GM13976 (cell line): ENCODE measurements at regions of chr3 and their contacts with region 1.

Region 1: DNA sequence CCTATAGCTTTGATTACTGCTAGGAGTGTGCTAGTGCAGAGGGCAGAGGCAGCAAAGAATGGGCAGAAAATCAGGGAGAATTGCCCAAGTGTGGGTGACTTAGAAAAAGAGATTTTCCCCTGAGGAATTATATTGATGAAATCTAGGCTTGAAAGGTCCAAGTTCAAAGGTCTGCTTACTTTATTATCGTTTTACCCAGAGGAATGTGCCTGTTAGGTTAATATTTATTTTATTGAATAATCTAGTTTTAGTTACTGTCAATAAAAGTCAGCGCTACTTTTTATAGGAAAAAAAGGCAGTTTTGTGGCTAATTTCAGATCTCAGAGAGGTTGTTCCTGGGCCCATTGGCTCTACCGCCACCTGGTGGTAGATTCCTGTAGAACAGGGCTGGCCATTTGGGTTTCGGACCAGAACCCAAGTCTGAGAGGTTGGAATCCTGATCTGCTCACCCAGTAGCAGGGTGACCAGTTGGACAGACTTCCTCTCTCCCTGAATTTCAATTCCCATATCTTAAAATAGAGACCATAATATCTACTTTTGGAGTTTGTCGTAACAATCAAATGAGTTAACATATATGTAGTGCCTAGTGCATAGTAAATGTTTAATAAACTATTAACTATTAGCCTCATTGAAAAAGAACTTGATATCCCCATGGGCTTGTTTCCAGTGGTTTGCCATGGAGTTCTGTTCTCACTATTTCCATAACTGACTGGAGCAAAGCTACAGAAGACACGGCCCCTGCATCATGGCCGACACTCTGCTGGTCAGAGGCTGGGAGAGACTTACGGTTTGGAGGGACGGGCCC is 62.7 kb upstream of the ZNF148 start:
- DNase-seq: peak; percentile 52
- CTCF ChIP-seq: peak; percentile 91

Region 2: DNA sequence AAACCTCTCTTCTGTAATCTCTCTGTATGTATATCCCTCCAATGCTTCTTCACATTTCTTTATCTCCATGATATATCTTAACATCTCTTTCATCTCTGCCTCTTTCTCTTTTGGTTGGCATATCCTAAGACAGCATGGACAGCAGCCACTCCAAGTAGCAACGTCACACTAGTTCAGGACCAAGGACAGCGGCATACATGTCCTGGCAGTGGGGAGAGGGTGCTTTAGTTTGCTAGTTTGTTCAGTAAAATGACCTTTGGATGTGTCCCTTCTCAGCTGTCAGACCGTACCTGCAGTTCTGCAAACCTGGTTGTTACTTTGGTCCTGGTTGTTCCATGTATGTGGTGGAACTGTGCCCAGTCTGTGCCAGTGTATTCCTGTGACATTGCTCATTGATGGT is 1220.3 kb before region 1 on chr3:
- in situ Hi-C with region 1: no loop called
- DNase-seq: peak; percentile 20
- CTCF ChIP-seq: no peak

Region 3: DNA sequence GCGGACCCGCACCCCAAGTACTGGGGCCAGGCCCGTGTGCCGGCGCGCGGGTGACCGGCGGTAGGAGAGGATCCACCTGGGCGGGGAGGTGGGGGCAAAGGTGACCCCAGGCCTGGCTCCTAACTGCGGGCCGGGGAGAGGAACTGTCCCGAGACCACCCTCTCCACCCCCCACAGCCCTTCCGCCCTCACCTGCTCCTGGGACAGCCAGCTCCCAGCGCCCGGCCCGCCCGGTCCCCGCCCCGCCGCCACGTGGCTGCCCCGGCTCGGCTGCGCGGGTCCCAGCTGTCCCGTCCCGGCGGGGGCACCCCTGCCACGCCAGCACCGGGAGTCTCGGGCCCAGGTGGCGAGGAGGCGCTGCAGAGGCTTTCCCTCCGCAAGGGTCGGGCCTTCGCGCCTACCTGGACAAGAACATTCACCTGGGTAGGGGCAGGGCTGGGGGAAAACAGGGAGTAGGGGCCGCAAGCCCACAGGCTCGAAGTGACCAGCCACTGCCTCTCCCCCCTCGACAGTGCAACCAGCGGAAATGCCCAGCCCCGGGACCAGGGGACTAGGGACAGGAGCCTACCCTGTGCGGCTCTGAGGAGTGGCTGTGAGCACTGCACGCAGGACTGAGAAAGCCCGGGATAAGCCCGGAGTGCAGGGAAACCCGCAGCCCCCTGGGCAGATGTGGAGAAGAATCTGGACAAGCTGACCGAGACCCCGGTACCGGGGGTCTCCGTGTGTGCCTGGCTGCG is 225.2 kb before region 1 on chr3 and contains the start of gene SLC12A8:
- in situ Hi-C with region 1: loop called (anchors 10 kb)
- DNase-seq: peak; percentile 61
- CTCF ChIP-seq: no peak